Left cardiac atrium (tissue), 4 donors: ENCODE measurements at regions of chr14 and their contacts with region 1.

Region 1: DNA sequence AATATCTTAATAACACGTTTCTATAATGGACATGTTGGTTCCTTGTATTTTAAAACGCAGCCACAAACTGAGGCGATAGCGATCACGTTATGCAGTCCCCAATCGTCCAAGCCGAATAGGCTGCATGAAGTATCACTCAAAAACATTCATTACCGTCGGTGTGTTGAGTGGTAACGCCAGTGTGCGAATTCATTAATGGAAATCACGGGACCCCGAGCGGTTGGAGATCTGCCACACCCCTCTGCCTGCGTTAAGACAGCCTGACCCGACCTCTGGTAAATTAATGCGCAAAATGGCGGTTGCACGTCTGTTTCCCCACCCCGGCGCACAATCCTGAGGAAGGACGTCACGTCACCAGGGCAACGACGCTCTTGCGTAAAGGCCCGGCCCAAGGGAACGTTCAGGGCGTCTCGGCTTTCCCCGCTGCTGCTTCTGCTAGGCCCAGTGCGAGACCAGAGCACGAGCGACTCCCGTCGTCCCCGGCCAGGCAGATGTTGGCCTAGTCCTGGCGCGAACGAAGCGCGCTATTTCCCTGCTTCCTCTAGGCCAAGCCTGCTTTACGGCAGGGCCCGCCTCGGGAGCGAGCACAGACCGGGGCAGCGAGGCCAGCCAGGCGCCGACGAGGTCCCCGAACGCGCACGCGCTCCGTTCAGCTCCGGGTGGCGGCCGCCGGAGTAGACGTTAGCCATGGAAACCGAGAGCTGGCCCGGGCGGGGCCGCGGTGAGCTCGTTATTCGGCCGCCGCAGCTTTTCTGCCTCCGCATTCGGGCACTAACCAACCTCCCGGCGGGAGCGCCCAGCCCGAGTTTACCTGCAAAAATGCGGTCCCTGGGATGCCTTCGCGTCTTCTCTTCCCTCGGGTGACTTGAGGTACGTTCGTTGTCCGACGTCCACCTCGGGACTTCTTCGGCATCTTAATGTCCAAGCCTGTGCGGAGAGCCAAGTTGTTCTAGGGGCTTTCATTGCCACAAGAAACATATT is at the start of gene PCNX4:
- DNase-seq: peak; percentile 97
- ATAC-seq: peak; percentile 97 to 99
- total RNA-seq, gene PCNX4: 30.4 to 37.8 TPM

Region 2: GRCh38 chr14:60164712-60165546 is 73.1 kb after region 1 on chr14 and contains the start of gene DHRS7:
- intact Hi-C with region 1: loop called in 1 of 2 experiments (anchors 2 kb)
- DNase-seq: peak; percentile 88
- ATAC-seq: peak; percentile 99
- total RNA-seq, gene DHRS7: 50.0 to 54.4 TPM

Region 3: GRCh38 chr14:60248697-60249318 is 157.0 kb after region 1 on chr14 and contains the start of gene PPM1A:
- intact Hi-C with region 1: loop called in 1 of 2 experiments (anchors 5 kb)
- DNase-seq: peak; percentile 97
- ATAC-seq: peak; percentile 93 to 94
- total RNA-seq, gene PPM1A: 73.2 to 76.0 TPM